ENCODE measurements at regions of chr1 and their contacts with region 1.

Region 1: DNA sequence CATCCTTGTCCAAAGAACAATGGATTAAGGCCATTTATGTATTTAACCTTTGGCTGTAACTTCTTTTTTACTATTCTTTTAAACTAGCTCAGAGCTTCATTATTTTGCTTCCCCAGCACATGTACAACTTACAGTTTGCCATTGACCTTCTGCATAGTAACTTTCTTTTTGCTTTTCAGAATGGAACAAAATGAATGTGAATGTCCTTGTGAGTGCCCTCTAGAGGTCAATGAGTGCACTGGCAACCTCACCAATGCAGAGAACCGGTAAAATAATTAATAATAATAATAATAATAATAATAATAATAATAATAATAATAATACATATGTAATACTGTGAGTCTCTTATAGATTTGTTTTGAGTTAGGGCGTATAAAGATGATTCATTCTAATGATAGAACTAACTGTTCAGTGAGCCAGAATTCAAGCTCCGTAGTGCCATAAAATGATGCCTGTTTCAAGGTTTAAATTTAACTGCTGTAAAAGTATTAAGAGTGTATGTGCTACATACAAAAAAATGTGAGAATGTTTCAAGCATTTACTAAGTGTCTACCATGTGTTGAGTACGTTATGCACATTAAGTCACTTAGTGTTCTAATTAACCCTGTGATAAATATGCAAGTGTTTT is 69.0 kb upstream of the RAVER2 start:
- DNase-seq: no peak
- ATAC-seq: no peak
- H3K4me3 Mint-ChIP-seq: no peak overlapping the region
- H3K27ac Mint-ChIP-seq: no peak overlapping the region
- H3K4me1 Mint-ChIP-seq: no peaks in the 10 kb centered on the region
- H3K27me3 Mint-ChIP-seq: no peaks in the 10 kb centered on the region
- CTCF ChIP-seq: peak; percentile 79

Region 2: DNA sequence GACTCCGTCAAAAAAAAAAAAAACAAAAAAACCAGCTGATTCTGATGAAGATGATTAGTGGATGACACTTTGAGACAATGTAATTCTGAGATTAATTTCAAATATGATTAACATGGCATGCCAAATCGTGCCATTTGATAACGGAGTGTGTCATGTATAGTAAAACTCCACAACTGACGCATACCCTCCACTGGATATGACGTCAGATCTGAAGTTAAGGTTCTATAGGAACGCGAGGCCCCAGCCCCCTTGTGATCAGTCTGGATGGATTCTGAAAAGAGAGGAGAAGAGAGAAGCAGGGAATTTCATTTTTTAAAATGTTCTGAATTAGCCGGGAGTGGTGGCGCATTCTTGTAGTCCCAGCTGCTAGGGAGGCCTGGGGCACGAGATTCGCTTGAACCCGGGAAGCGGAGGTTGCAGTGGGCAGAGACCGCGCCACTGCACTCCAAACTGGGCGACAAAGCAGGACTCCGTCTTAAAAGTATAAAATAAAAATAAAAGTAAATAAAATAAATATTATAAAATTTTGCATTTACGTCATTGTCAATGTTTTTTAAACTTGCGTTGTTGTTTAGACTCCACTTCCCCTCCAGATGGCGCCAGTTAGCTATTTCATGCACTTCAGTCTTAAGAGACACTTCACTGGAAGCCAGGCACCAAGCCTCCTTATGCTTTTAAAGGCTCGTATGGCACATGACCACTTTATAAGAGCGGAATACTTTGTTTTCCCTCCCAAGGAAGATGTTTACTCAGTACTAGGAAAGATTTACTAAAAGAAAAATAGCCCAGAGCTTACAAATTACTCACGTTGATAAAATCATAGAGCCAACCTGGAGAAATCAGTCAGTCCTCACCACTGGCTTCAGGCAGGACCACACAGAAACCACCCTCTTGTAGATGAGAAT is 406.9 kb before region 1 on chr1:
- CTCF ChIA-PET with region 1: interaction called, 12 read pairs
- POLR2A ChIA-PET with region 1: no interaction called
- intact Hi-C with region 1: loop called (anchors 5 kb)
- DNase-seq: peak; percentile 77
- ATAC-seq: peak; percentile 65
- H3K4me3 Mint-ChIP-seq: no peak overlapping the region
- H3K27ac Mint-ChIP-seq: no peak overlapping the region
- H3K4me1 Mint-ChIP-seq: no peaks in the 10 kb centered on the region
- H3K27me3 Mint-ChIP-seq: peaks cover 8% of the 10 kb centered on the region
- CTCF ChIP-seq: peak; percentile 82

Region 3: GRCh38 chr1:64663668-64664067 is 12.2 kb before region 1 on chr1:
- CTCF ChIA-PET with region 1: interaction called, 21 read pairs
- POLR2A ChIA-PET with region 1: interaction called, 3 read pairs
- intact Hi-C with region 1: no loop called
- DNase-seq: peak; percentile 47
- ATAC-seq: peak; percentile 13
- H3K4me3 Mint-ChIP-seq: no peak overlapping the region
- H3K27ac Mint-ChIP-seq: no peak overlapping the region
- H3K4me1 Mint-ChIP-seq: no peaks in the 10 kb centered on the region
- H3K27me3 Mint-ChIP-seq: no peaks in the 10 kb centered on the region
- CTCF ChIP-seq: peak; percentile 45

Region 4: DNA sequence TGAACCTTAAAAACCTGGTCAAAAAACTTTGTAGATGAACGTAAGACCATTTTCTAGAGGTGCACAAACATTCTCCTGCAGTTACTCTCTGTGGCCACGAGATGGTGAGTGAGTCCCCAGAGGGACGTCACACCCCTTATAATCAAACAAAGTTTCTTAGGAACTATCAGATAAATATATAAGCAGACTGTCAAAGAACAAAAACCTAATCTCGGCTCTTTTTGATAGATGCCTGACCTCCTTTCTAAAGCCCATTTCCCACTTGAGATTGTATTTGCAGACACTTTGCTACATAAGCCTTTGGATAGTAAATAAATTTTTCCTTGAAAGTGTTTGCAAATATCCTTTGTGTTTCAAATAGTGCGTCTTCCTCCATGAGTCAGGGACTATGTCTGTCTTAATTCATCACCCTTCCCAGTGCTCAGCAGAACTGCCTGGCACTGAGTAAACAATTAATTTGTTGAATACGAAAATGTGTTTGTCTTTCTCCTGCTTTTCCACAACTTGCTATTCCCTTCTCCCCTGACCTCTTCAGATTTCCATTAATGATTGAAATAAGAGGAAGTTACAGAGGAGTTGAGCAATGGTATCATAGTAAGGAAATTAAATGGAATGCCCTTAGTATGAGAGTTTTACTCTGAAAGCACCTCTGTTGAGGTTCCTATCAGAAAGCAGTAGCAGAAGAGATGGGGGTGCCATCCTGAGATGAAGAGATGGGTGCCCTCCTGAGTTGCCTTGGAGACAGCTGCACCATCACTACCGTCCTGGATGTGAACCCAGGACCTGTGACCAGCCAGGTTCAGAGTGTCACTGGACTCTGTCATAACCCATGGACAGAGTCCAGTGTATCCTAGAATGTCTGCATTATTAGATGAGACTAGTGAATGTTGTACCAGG is 11.2 kb after region 1 on chr1:
- CTCF ChIA-PET with region 1: interaction called, 15 read pairs
- POLR2A ChIA-PET with region 1: no interaction called
- intact Hi-C with region 1: no loop called
- DNase-seq: peak; percentile 34
- ATAC-seq: peak; percentile 73
- H3K4me3 Mint-ChIP-seq: no peak overlapping the region
- H3K27ac Mint-ChIP-seq: no peak overlapping the region
- H3K4me1 Mint-ChIP-seq: peaks cover 5% of the 10 kb centered on the region
- H3K27me3 Mint-ChIP-seq: no peaks in the 10 kb centered on the region
- CTCF ChIP-seq: peak; percentile 86